Panc1 (cell line): ENCODE measurements at regions of chr1 and their contacts with region 1.

Region 1: GRCh38 chr1:17531682-17532487 is 7.6 kb upstream of the ARHGEF10L start:
- DNase-seq: no peak
- ATAC-seq: peak; percentile 74
- H3K4me3 ChIP-seq: no peak overlapping the region
- H3K27ac ChIP-seq: peak overlapping the region; percentile 64
- H3K4me1 ChIP-seq: peaks cover 21% of the 10 kb centered on the region
- H3K27me3 ChIP-seq: no peaks in the 10 kb centered on the region
- CTCF ChIP-seq: no peak

Region 2: GRCh38 chr1:17370618-17371017 is 161.3 kb before region 1 on chr1:
- CTCF ChIA-PET with region 1: no interaction called
- POLR2A ChIA-PET with region 1: no interaction called
- in situ Hi-C with region 1: no loop called
- intact Hi-C with region 1: no loop called
- DNase-seq: no peak
- ATAC-seq: peak; percentile 62; the same call in 1 of the 2 replicates
- H3K4me3 ChIP-seq: no peak overlapping the region
- H3K27ac ChIP-seq: no peak overlapping the region
- H3K4me1 ChIP-seq: peaks cover 4% of the 10 kb centered on the region
- H3K27me3 ChIP-seq: no peaks in the 10 kb centered on the region
- CTCF ChIP-seq: no peak

Region 3: DNA sequence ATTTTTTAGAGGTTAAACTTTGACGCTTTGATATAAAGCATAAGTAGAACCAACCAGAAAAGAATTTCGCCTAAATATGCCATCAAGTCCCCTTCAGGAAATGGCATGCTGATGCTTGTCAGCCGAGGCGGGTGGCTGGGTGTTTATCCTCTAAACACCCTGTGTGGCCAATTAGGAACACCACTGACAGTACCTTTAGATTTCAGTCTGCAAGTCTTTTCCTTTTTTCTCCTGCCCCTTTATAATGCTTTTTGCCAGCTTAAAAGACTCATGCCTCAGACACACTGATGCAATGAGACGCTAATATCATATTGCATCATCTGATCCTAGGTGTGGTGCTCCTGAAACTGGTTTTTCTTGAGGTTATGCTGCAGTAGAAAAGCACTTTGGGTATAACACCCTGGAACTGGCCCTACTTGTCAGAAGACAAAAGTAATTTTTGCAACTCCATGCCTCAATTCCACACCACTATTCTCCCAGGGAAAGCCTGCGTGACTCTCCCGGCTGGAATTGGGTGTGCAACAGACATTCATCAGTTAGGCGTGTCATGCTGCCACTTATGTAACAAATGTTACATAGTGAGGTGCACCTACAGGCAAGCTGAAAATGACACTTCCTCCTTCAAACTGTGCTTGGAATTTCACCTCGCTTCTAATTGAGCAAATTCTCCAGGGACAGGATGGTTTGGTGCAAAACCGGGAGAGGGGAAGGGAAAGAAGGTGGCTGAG is 90.5 kb before region 1 on chr1:
- CTCF ChIA-PET with region 1: no interaction called
- POLR2A ChIA-PET with region 1: interaction called, 24 read pairs
- in situ Hi-C with region 1: no loop called
- intact Hi-C with region 1: no loop called
- DNase-seq: peak; percentile 63
- ATAC-seq: no peak
- H3K4me3 ChIP-seq: peak overlapping the region in 1 of 2 experiments; percentile 67; a peak in 2 of 4 replicates
- H3K27ac ChIP-seq: peak overlapping the region; percentile 93; the same call in 1 of the 2 replicates
- H3K4me1 ChIP-seq: peaks cover 22% of the 10 kb centered on the region
- H3K27me3 ChIP-seq: no peaks in the 10 kb centered on the region
- CTCF ChIP-seq: no peak

Region 4: GRCh38 chr1:17475729-17476128 is 56.2 kb before region 1 on chr1:
- CTCF ChIA-PET with region 1: no interaction called
- POLR2A ChIA-PET with region 1: no interaction called
- in situ Hi-C with region 1: no loop called
- intact Hi-C with region 1: no loop called
- DNase-seq: no peak
- ATAC-seq: no peak
- H3K4me3 ChIP-seq: no peak overlapping the region
- H3K27ac ChIP-seq: no peak overlapping the region
- H3K4me1 ChIP-seq: peaks cover 3% of the 10 kb centered on the region; the same call in 1 of the 2 replicates
- H3K27me3 ChIP-seq: no peaks in the 10 kb centered on the region
- CTCF ChIP-seq: no peak